Activated CD4-positive, alpha-beta memory T cell treated with anti-CD3 and anti-CD28 coated beads, Interleukin-2, amount 10 ng/mL, durations not matched to agents 7 days and 5 days (primary cell): ENCODE measurements at regions of chr17 and their contacts with region 1.

Region 1: DNA sequence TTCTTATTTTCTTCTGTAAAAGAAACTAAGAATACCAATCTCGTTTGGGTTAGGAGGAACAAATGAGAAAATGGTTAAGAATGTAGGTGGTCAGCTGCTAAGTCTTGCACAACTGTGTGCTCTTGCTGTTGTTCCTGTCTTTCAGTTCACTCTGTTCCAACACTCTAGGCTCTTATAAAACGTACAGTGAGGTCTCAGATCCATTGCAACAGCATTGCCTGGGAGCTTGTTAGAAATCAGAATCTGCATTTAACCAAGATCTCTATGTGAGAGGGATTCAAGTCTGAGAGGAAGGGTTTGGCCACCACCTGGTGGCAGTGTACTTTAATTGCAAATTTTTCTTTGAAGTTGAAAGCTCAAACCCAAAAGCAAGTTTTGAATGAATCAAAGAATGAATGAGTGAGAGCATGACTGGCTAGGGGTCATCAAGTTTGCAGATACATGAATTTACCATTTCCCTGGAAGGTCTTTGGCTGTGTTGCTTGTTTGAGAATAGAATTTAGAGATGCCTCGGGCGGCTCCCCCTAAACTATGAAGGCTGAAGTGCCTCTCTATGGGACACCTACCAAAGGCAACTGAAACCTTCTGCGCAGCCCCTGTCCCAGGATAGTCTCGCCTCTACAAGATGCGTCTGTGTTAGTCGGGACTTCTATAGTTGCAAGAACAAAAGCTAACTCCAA is 2.5 kb downstream of the ALOX15B start:
- DNase-seq: peak; percentile 54
- H3K4me3 Mint-ChIP-seq: no peak overlapping the region
- H3K27ac Mint-ChIP-seq: no peak overlapping the region
- H3K4me1 Mint-ChIP-seq: no peaks in the 10 kb centered on the region
- H3K27me3 Mint-ChIP-seq: peaks cover 31% of the 10 kb centered on the region

Region 2: GRCh38 chr17:7833795-7834541 is 207.4 kb before region 1 on chr17 and contains the start of gene KDM6B:
- CTCF ChIA-PET with region 1: no interaction called
- POLR2A ChIA-PET with region 1: no interaction called
- DNase-seq: peak; percentile 90
- H3K4me3 Mint-ChIP-seq: peak within 1 kb of the TSS; percentile 95
- H3K27ac Mint-ChIP-seq: peak within 1 kb of the TSS; percentile 91
- H3K4me1 Mint-ChIP-seq: peaks cover 40% of the 10 kb centered on the region
- H3K27me3 Mint-ChIP-seq: peaks cover 26% of the 10 kb centered on the region
- total RNA-seq, gene KDM6B: 20.9 to 23.7 TPM

Region 3: GRCh38 chr17:7915611-7916382 is 125.6 kb before region 1 on chr17 and contains the start of gene RNF227:
- CTCF ChIA-PET with region 1: interaction called, 19 read pairs
- POLR2A ChIA-PET with region 1: interaction called, 4 read pairs
- DNase-seq: peak; percentile 84
- H3K4me3 Mint-ChIP-seq: peak within 1 kb of the TSS; percentile 90
- H3K27ac Mint-ChIP-seq: peak within 1 kb of the TSS; percentile 88
- H3K4me1 Mint-ChIP-seq: peaks cover 35% of the 10 kb centered on the region
- H3K27me3 Mint-ChIP-seq: no peaks in the 10 kb centered on the region
- total RNA-seq, gene RNF227: 3.6 to 3.7 TPM

Region 4: DNA sequence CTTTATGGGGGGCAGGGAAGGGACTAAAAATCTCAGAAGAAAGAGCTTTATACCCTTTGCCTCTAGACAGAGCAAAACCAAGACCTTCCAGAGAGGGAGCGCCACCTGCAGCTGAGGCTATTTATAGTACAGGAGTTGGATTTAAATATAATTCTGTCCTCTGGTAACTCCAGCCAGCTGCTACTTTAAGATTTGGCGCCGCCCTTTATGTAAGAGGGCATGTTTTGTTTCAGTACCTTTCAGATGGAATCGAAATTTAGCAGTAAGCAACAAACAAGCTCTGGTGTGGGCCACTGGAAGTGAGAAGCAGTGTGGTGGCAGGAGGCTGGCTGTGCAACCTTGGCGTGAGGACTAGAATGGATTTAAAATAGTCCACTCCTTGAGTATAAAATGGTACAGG is 44.2 kb before region 1 on chr17:
- CTCF ChIA-PET with region 1: interaction called, 11 read pairs
- POLR2A ChIA-PET with region 1: no interaction called
- DNase-seq: peak; percentile 54
- H3K4me3 Mint-ChIP-seq: no peak overlapping the region
- H3K27ac Mint-ChIP-seq: no peak overlapping the region
- H3K4me1 Mint-ChIP-seq: peaks cover 9% of the 10 kb centered on the region
- H3K27me3 Mint-ChIP-seq: peaks cover 38% of the 10 kb centered on the region

Region 5: GRCh38 chr17:8016632-8017478 is 24.5 kb before region 1 on chr17:
- CTCF ChIA-PET with region 1: interaction called, 28 read pairs
- POLR2A ChIA-PET with region 1: no interaction called
- DNase-seq: peak; percentile 66
- H3K4me3 Mint-ChIP-seq: peak overlapping the region; percentile 59
- H3K27ac Mint-ChIP-seq: no peak overlapping the region
- H3K4me1 Mint-ChIP-seq: peaks cover 11% of the 10 kb centered on the region
- H3K27me3 Mint-ChIP-seq: peaks cover 26% of the 10 kb centered on the region

Region 6: DNA sequence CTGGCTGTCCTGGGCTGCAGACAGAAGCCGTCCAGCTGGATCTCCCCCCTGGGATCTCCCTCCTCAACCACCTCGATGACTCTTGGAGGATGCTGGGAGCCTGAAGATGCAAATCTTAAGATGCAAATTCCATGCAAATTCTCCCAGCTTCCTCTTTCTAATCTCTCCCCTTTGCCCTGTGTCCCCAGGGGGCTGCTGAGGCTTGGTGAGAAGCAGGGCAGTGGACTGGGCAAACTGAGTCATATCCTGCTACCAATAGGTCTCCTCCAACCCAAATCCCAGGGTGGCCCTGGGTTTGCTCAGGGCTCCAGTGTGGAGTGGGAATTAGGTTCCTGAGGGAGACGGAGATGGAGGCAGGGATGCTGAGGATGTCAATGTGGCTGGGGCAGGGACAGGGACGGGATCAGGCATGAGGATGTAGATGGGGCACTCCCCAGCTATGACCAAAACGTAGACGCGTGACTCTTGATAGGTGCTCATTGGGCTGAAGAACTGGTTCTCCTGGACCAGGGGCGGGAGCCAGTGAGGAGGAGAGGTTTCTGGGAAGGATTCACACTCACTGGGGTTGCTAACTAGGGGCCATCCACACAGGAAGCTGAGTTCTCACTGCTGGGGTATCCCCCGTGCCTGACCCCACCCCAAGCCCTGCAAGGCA is 49.8 kb after region 1 on chr17:
- CTCF ChIA-PET with region 1: interaction called, 12 read pairs
- POLR2A ChIA-PET with region 1: no interaction called
- DNase-seq: no peak
- H3K4me3 Mint-ChIP-seq: no peak overlapping the region
- H3K27ac Mint-ChIP-seq: no peak overlapping the region
- H3K4me1 Mint-ChIP-seq: peaks cover 16% of the 10 kb centered on the region
- H3K27me3 Mint-ChIP-seq: peaks cover 45% of the 10 kb centered on the region

Region 7: GRCh38 chr17:8156246-8156992 is 115.0 kb after region 1 on chr17:
- CTCF ChIA-PET with region 1: no interaction called
- POLR2A ChIA-PET with region 1: no interaction called
- DNase-seq: peak; percentile 100
- H3K4me3 Mint-ChIP-seq: no peak overlapping the region
- H3K27ac Mint-ChIP-seq: no peak overlapping the region
- H3K4me1 Mint-ChIP-seq: peaks cover 51% of the 10 kb centered on the region
- H3K27me3 Mint-ChIP-seq: no peaks in the 10 kb centered on the region

Region 8: GRCh38 chr17:8223357-8224126 is 182.2 kb after region 1 on chr17:
- CTCF ChIA-PET with region 1: no interaction called
- POLR2A ChIA-PET with region 1: no interaction called
- DNase-seq: peak; percentile 70
- H3K4me3 Mint-ChIP-seq: peak overlapping the region; percentile 95
- H3K27ac Mint-ChIP-seq: peak overlapping the region; percentile 99
- H3K4me1 Mint-ChIP-seq: peaks cover 64% of the 10 kb centered on the region
- H3K27me3 Mint-ChIP-seq: peaks cover 2% of the 10 kb centered on the region